Endothelial cell of umbilical vein (primary cell): ENCODE measurements at regions of chr6 and their contacts with region 1.

Region 1: DNA sequence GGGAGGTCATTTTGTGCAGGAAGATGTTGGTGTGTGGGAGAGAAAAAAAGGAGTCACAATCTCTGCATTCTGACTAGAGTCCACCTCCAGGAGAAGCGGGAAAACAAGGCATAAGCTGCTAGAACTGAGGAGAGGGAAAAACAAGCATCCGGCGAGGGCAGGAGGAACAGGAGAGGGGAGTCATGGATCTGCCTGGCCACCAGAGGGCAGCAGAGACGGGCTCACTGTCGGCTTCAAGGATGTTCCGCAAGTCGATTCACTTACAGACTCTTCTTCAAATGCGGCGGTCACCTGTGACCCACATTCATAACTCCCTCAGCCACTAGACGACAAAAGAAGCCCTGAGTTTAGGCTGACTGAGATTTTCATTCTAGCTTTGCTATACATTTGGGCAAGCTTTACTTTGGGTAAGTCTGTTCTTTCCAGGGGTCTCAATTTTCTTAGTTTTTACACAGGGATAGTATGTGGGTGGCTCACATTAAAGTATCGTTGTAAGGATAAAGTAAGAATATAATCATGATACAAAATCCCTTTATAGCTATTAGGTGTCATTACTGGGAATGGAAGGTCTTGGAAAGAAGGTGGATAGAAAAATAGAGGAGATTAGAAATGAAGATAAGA is 6.6 kb upstream of the BTNL2 start:
- DNase-seq: peak; percentile 84
- H3K4me3 ChIP-seq: no peak overlapping the region
- H3K27ac ChIP-seq: no peak overlapping the region
- H3K4me1 ChIP-seq: peaks cover 8% of the 10 kb centered on the region
- H3K27me3 ChIP-seq: peaks cover 15 to 26% of the 10 kb centered on the region in 2 experiments
- CTCF ChIP-seq: peak; percentile 79 to 94
- POLR2A ChIP-seq: no peak

Region 2: GRCh38 chr6:32255199-32256153 is 158.1 kb before region 1 on chr6:
- CTCF ChIA-PET with region 1: interaction called, 7 read pairs
- POLR2A ChIA-PET with region 1: no interaction called
- dilution Hi-C with region 1: loop called (anchors 25 kb)
- intact Hi-C with region 1: loop called (anchors 2 kb)
- DNase-seq: peak; percentile 91
- H3K4me3 ChIP-seq: peak overlapping the region in 1 of 3 experiments; percentile 19
- H3K27ac ChIP-seq: peak overlapping the region; percentile 79
- H3K4me1 ChIP-seq: peaks cover 27% of the 10 kb centered on the region
- H3K27me3 ChIP-seq: no peaks in the 10 kb centered on the region
- CTCF ChIP-seq: peak; percentile 33 to 86
- POLR2A ChIP-seq: peak; percentile 72

Region 3: DNA sequence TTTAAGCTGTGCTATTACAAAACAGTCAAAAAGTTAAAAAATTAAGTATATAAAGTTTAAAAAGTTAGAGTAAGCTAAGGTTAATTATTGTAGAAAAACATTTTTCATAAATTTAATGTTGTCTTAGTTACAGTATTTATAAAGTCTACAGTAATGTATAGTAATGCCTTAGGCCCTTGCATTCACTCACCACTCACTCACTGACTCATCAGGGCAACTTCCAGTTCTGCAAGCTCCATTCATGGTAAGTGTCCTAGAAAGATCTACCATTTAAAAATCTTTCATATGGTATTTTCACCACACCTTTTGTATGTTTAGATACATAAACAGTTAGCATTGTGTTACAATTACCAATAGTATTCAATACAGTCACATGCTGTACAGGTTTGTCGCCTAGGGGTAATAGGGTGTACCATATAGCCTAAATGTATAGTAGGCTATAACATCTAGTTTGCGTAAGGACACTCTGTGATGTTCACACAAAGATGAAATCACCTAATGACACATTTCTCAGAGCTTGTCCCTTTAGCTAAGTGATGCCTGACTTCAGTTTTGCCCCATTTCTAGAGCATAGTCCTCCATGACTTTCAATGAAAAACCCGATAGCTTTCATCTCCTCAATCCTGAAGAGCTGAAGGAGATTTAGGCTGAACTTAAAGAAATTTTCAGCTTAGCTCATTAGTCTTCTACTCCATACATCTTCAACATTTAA is 11.2 kb after region 1 on chr6:
- CTCF ChIA-PET with region 1: interaction called, 15 read pairs
- POLR2A ChIA-PET with region 1: no interaction called
- dilution Hi-C with region 1: no loop called
- intact Hi-C with region 1: no loop called
- DNase-seq: no peak
- H3K4me3 ChIP-seq: no peak overlapping the region
- H3K27ac ChIP-seq: no peak overlapping the region
- H3K4me1 ChIP-seq: no peaks in the 10 kb centered on the region
- H3K27me3 ChIP-seq: peaks cover 21 to 25% of the 10 kb centered on the region in 2 experiments
- CTCF ChIP-seq: no peak
- POLR2A ChIP-seq: no peak

Region 4: GRCh38 chr6:32785781-32786533 is 372.4 kb after region 1 on chr6:
- CTCF ChIA-PET with region 1: interaction called, 40 read pairs
- POLR2A ChIA-PET with region 1: no interaction called
- dilution Hi-C with region 1: no loop called
- intact Hi-C with region 1: loop called (anchors 1 kb)
- DNase-seq: peak; percentile 58
- H3K4me3 ChIP-seq: no peak overlapping the region
- H3K27ac ChIP-seq: no peak overlapping the region
- H3K4me1 ChIP-seq: no peaks in the 10 kb centered on the region
- H3K27me3 ChIP-seq: peaks cover 8 to 50% of the 10 kb centered on the region in 2 experiments
- CTCF ChIP-seq: peak; percentile 49 to 51
- POLR2A ChIP-seq: no peak